CD4-positive, alpha-beta T cell (primary cell): ENCODE measurements at regions of chr6 and their contacts with region 1.

Region 1: DNA sequence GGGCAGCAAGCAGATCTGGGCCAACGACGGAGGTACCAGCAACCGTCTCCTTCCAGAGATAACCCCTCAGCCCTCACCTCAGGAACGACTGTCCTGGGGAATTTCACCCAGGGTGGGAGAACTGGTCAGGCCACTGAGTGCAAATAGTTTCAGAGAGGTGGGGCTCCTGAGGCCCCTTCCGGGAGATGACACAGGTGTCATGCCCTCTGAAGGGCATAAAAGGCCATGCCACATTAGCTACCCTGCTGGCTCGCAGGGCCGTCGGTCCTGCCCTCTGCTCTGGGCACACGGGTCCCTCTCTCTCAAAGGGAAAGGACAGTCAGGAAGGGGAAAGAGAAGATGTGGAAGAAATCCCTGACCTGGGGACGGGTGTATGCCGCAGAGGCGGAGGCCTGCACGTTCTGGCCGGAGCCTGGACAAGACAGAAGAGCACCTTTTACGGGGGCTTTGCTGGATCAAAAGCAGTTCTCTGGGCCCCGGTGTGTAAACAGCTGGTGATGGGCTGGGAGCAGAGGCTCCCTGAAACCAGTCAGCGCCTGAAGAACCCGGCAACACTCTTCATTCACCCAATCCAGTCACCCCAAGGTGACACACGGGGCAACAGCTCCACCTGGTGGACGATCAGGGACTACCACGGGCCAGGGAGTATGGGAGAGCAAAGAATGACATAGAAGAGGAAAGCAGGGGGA is 6.4 kb upstream of the TAF8 start:
- DNase-seq: peak; percentile 88 to 96 (median 92)
- ATAC-seq: peak; percentile 31
- H3K4me3 ChIP-seq: peak overlapping the region; percentile 45
- H3K4me3 Mint-ChIP-seq: peak overlapping the region; percentile 87
- H3K27ac ChIP-seq: peak overlapping the region; percentile 5 to 57
- H3K27ac Mint-ChIP-seq: peak overlapping the region; percentile 89
- H3K4me1 ChIP-seq: peaks cover 86% of the 10 kb centered on the region
- H3K4me1 Mint-ChIP-seq: peaks cover 84% of the 10 kb centered on the region
- H3K27me3 ChIP-seq: no peaks in the 10 kb centered on the region
- H3K27me3 Mint-ChIP-seq: no peaks in the 10 kb centered on the region
- CTCF ChIP-seq: peak; percentile 89

Region 2: GRCh38 chr6:41787219-41787917 is 256.6 kb before region 1 on chr6 and contains the start of gene TOMM6:
- CTCF ChIA-PET with region 1: interaction called, 75 read pairs
- POLR2A ChIA-PET with region 1: interaction called, 34 read pairs
- intact Hi-C with region 1: loop called (anchors 1 kb)
- DNase-seq: peak; percentile 91 to 97 (median 93)
- ATAC-seq: peak; percentile 77
- H3K4me3 ChIP-seq: peak within 1 kb of the TSS; percentile 78
- H3K4me3 Mint-ChIP-seq: peak within 1 kb of the TSS; percentile 92
- H3K27ac ChIP-seq: peak within 1 kb of the TSS; percentile 87 to 89
- H3K27ac Mint-ChIP-seq: peak within 1 kb of the TSS; percentile 96
- H3K4me1 ChIP-seq: peaks cover 23% of the 10 kb centered on the region
- H3K4me1 Mint-ChIP-seq: peaks cover 27% of the 10 kb centered on the region
- H3K27me3 ChIP-seq: no peaks in the 10 kb centered on the region
- H3K27me3 Mint-ChIP-seq: no peaks in the 10 kb centered on the region
- CTCF ChIP-seq: peak; percentile 90
- total RNA-seq, gene TOMM6: 78.8 to 83.2 TPM

Region 3: DNA sequence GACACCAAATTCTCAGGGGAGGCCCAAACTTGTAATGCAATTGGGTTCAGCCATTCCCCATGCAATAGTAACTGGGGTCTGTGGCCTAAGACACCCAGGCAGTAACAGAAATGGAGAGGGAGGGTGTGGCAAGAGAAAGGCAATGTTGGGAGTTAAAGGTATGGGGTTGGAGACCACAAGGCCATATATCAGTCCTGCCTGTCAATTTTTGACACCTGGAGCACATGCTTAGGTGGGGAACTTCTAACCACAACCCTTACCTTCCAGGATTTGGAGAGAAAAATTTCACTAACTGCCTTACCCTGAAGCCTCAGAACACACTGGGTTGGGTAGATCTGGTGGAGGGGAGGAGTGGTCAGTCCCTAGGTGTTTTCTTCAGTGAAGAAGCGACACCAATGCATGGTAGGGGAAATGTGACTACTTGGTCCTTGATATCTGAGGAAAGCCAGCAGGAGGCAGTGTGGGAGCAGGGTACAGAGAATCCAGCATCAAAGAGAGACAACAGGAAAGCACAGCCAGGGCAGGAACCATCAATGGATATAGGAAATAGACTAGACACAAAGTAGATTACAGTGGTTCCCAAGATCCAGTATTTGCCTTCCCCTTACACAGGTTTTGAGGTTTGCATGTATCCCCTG is 141.9 kb before region 1 on chr6:
- CTCF ChIA-PET with region 1: interaction called, 5 read pairs
- POLR2A ChIA-PET with region 1: interaction called, 4 read pairs
- intact Hi-C with region 1: loop called (anchors 1 kb)
- DNase-seq: peak; percentile 32 to 81 (median 44)
- ATAC-seq: peak; percentile 74
- H3K4me3 ChIP-seq: no peak overlapping the region
- H3K4me3 Mint-ChIP-seq: no peak overlapping the region
- H3K27ac ChIP-seq: no peak overlapping the region
- H3K27ac Mint-ChIP-seq: no peak overlapping the region
- H3K4me1 ChIP-seq: peaks cover 8% of the 10 kb centered on the region
- H3K4me1 Mint-ChIP-seq: peaks cover 12% of the 10 kb centered on the region
- H3K27me3 ChIP-seq: no peaks in the 10 kb centered on the region
- H3K27me3 Mint-ChIP-seq: no peaks in the 10 kb centered on the region
- CTCF ChIP-seq: peak; percentile 64

Region 4: GRCh38 chr6:41941280-41942066 is 102.5 kb before region 1 on chr6 and contains the start of gene CCND3:
- CTCF ChIA-PET with region 1: interaction called, 24 read pairs
- POLR2A ChIA-PET with region 1: interaction called, 168 read pairs
- intact Hi-C with region 1: loop called (anchors 1 kb)
- DNase-seq: peak; percentile 63 to 92 (median 81)
- ATAC-seq: peak; percentile 55
- H3K4me3 ChIP-seq: peak within 1 kb of the TSS; percentile 96
- H3K4me3 Mint-ChIP-seq: peak within 1 kb of the TSS; percentile 97
- H3K27ac ChIP-seq: peak within 1 kb of the TSS; percentile 68 to 74
- H3K27ac Mint-ChIP-seq: peak within 1 kb of the TSS; percentile 93
- H3K4me1 ChIP-seq: peaks cover 72% of the 10 kb centered on the region
- H3K4me1 Mint-ChIP-seq: peaks cover 80% of the 10 kb centered on the region
- H3K27me3 ChIP-seq: no peaks in the 10 kb centered on the region
- H3K27me3 Mint-ChIP-seq: no peaks in the 10 kb centered on the region
- CTCF ChIP-seq: no peak
- total RNA-seq, gene CCND3: 247 to 248 TPM

Region 5: GRCh38 chr6:42028234-42029061 is 15.5 kb before region 1 on chr6:
- CTCF ChIA-PET with region 1: interaction called, 9 read pairs
- POLR2A ChIA-PET with region 1: interaction called, 43 read pairs
- intact Hi-C with region 1: loop called (anchors 2 kb)
- DNase-seq: peak in 1 of 14 experiments; percentile 55
- ATAC-seq: peak; percentile 16
- H3K4me3 ChIP-seq: no peak overlapping the region
- H3K4me3 Mint-ChIP-seq: peak overlapping the region; percentile 84
- H3K27ac ChIP-seq: peak overlapping the region; percentile 36 to 50
- H3K27ac Mint-ChIP-seq: peak overlapping the region; percentile 94
- H3K4me1 ChIP-seq: peaks cover 99% of the 10 kb centered on the region
- H3K4me1 Mint-ChIP-seq: peaks cover 90% of the 10 kb centered on the region
- H3K27me3 ChIP-seq: no peaks in the 10 kb centered on the region
- H3K27me3 Mint-ChIP-seq: no peaks in the 10 kb centered on the region
- CTCF ChIP-seq: no peak